ENCODE measurements at regions of chr1 and their contacts with region 1.

Region 1: DNA sequence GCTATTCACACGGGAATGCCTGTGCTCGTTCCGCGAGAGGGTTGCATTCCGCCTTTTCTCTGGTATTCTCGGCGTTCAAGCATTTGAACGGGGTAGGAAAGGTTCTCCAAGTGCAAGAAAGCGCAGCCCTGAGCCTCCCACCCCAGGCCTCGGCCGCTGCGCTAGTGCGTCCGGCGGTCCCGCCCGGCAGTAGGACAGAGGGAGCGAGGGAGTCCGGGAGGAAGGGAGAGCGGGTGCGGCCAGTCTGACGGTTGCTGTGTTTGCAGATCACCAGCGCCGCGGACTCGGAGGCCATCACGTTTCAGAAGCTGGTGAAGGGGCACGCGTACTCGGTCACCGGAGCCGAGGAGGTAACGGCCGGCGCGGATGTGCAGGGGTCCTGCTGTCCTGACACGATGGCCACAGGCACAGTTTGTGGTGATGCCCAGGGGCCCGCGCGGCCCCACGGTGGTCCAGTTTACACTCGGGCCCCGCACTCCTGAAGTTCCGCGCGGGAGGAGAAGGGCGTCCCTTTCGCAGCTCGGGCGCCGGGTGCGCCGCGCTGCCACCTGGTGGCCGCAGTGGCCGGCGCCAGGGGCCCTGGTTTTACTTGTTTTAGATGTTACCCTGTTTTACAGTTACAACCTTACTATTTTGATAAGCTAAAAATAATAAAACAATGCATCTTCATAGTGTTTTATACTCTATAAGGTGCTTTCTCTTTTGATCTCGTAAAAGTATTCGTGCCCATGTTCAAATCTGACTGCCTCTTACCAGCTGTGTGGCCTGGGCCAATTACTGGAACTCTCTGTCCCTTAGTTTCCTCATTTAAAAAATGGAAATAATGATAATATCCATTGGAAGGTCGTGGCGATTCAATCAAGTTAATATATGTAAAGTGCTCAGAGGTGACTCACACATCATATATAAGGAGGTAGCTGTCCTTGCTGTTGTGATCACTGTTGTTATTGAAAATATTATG is 36.7 kb downstream of the CAPN2 start:
- DNase-seq: no peak
- H3K4me3 ChIP-seq: peak overlapping the region; percentile 27; the same call in 1 of the 2 replicates
- CTCF ChIP-seq: peak; percentile 80

Region 2: GRCh38 chr1:223695941-223696340 is 53.1 kb before region 1 on chr1:
- CTCF ChIA-PET with region 1: interaction called, 122 read pairs
- POLR2A ChIA-PET with region 1: interaction called, 8 read pairs
- DNase-seq: no peak
- H3K4me3 ChIP-seq: no peak overlapping the region
- CTCF ChIP-seq: no peak

Region 3: GRCh38 chr1:223712194-223712849 is 36.7 kb before region 1 on chr1 and contains the start of gene CAPN2:
- CTCF ChIA-PET with region 1: interaction called, 57 read pairs
- POLR2A ChIA-PET with region 1: interaction called, 3 read pairs
- DNase-seq: no peak
- H3K4me3 ChIP-seq: peak within 1 kb of the TSS; percentile 95
- CTCF ChIP-seq: peak; percentile 73

Region 4: GRCh38 chr1:223726380-223727001 is 22.6 kb before region 1 on chr1:
- CTCF ChIA-PET with region 1: interaction called, 62 read pairs
- POLR2A ChIA-PET with region 1: interaction called, 6 read pairs
- DNase-seq: peak; percentile 75
- H3K4me3 ChIP-seq: no peak overlapping the region; the same call in 1 of the 2 replicates
- CTCF ChIP-seq: no peak

Region 5: DNA sequence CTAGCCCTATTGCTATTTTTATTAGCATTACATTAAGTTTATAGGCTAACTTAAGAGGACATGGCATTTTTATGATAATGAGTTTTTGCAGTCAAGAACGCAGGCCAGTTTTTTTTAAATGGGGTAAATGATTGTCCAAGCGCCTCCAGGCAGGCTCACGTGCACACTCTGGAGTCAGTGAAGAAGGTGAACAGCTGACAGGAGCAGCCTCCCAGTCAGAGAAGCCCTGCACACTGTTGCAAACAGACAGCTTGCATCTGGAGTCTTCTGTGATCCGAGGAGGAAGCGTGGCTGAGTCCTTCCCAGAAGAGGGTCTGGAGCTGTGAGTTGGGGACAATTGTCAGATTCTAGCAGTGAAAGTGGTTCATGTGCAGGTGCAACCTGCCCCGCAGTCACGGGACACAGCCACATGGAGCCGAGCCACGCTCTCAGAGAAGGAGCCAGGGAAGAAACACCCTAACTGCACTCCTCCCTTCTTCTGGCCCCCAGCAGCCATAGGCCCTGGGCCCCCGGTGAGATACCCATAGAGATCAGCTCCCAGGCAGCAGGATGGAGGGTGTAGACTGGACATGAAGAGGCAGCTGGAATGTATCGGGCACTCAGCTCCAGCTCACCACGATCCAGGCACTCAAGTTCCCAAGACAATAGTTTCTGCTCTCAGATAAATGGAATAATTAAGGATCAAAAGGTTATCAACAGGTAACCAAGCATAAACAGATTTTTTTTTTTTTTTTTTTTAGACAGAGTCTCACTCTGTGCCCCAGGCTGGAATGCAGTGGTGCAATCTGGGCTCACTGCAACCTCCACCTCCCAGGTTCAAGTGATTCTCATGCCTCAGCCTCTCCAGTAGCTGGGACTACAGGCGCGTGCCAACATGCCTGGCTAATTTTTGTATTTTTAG is 10.3 kb before region 1 on chr1:
- CTCF ChIA-PET with region 1: interaction called, 40 read pairs
- POLR2A ChIA-PET with region 1: no interaction called
- DNase-seq: no peak
- H3K4me3 ChIP-seq: no peak overlapping the region
- CTCF ChIP-seq: no peak

Region 6: GRCh38 chr1:223765036-223765718 is 16.1 kb after region 1 on chr1:
- CTCF ChIA-PET with region 1: interaction called, 39 read pairs
- POLR2A ChIA-PET with region 1: no interaction called
- DNase-seq: peak; percentile 33
- H3K4me3 ChIP-seq: no peak overlapping the region
- CTCF ChIP-seq: no peak

Region 7: DNA sequence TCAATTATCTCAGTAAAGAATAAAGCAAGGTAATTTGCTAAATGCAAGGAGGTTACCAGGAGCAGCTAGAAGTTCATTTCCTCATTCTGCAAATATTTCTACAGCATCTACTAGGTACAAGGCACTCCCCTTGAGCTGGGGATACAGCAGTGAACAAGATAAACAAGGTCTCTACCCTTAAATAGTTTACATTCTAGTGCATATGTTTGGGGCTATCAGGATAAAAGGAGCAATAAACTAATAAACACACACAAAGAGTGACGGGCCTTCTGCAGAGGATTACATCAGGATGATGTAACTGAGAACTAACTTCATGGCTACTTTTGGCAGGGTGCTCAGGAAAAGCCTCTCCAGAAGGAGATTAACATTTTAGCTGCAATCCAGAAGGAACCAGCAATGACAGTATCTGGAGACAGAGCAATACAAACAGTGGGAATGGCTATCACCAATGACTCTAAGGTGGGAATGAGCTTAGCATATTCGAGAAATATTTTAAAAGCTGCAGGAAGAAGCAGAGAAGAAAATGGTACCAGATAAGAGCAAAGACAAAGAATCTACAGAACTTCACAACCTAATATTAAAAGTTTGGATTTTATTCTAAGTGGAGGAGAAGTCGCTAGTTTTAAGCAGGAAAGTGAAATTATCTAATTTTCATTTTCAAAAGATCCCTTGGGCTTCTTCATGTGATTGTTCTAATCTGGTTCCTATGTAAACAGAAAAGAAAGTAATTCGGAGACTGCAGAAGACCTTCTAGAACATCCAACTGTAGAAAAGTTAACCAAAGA is 70.9 kb after region 1 on chr1:
- CTCF ChIA-PET with region 1: no interaction called
- POLR2A ChIA-PET with region 1: no interaction called
- DNase-seq: no peak
- H3K4me3 ChIP-seq: no peak overlapping the region
- CTCF ChIP-seq: no peak

Region 8: DNA sequence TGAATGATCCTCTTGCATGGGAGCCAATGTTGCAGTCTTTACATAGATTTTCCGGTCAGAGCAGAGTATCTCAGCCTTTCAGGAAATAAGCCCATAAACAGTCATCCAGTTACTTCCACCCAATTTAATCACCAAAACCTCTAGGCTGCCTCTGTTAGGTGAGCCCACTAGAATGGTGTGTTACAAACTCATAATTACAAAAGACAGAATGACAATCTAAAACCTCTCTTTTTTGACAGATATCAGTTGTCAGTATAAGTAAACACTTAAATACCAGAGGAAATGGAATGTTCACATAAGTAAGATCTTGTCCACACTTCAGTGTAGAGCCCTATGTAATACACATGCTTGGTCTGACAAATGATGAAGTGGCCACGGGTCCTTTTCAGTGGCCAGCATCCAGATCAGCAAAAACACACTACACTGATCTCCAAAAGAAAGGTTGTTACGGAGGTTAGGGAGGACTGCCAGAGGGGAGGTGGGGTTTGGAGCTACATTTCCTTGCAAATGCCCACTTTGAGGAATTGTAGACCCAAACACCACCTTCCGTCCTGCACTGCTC is 293.6 kb after region 1 on chr1:
- CTCF ChIA-PET with region 1: no interaction called
- POLR2A ChIA-PET with region 1: no interaction called
- DNase-seq: no peak
- H3K4me3 ChIP-seq: no peak overlapping the region
- CTCF ChIP-seq: no peak